HepG2 (cell line): ENCODE measurements at regions of chr2 and their contacts with region 1.

Region 1: GRCh38 chr2:231900486-231900942 is 25.7 kb downstream of the NPPC start:
- DNase-seq: peak; percentile 80
- ATAC-seq: peak; percentile 97
- H3K4me3 ChIP-seq: peak overlapping the region; percentile 11 to 58 (median 15); a peak in 4 of 6 replicates
- H3K27ac ChIP-seq: no peak overlapping the region
- H3K4me1 ChIP-seq: peaks cover 17% of the 10 kb centered on the region
- H3K27me3 ChIP-seq: peaks cover 0 to 25% of the 10 kb centered on the region in 2 experiments; a peak in 4 of 5 replicates
- CTCF ChIP-seq: peak; percentile 99
- EP300 ChIP-seq: no peak
- POLR2A ChIP-seq: no peak
- RAD21 ChIP-seq: peak; percentile 89

Region 2: GRCh38 chr2:231854671-231855070 is 45.8 kb before region 1 on chr2:
- CTCF ChIA-PET with region 1: no interaction called
- POLR2A ChIA-PET with region 1: no interaction called
- in situ Hi-C with region 1: no loop called
- intact Hi-C with region 1: loop called (anchors 2 kb)
- DNase-seq: no peak
- ATAC-seq: no peak; the same call in 2 of the 3 replicates
- H3K4me3 ChIP-seq: no peak overlapping the region
- H3K27ac ChIP-seq: no peak overlapping the region
- H3K4me1 ChIP-seq: no peaks in the 10 kb centered on the region
- H3K27me3 ChIP-seq: peaks cover 3 to 50% of the 10 kb centered on the region in 2 experiments
- CTCF ChIP-seq: no peak
- EP300 ChIP-seq: no peak
- POLR2A ChIP-seq: no peak
- RAD21 ChIP-seq: no peak

Region 3: GRCh38 chr2:232142049-232142448 is 241.5 kb after region 1 on chr2:
- CTCF ChIA-PET with region 1: interaction called, 26 read pairs
- POLR2A ChIA-PET with region 1: no interaction called
- in situ Hi-C with region 1: no loop called
- intact Hi-C with region 1: no loop called
- DNase-seq: peak; percentile 28
- ATAC-seq: peak; percentile 86
- H3K4me3 ChIP-seq: no peak overlapping the region
- H3K27ac ChIP-seq: no peak overlapping the region
- H3K4me1 ChIP-seq: peaks cover 14% of the 10 kb centered on the region
- H3K27me3 ChIP-seq: no peaks in the 10 kb centered on the region
- CTCF ChIP-seq: peak; percentile 73
- EP300 ChIP-seq: no peak
- POLR2A ChIP-seq: no peak
- RAD21 ChIP-seq: peak; percentile 79; the same call in 1 of the 2 replicates

Region 4: DNA sequence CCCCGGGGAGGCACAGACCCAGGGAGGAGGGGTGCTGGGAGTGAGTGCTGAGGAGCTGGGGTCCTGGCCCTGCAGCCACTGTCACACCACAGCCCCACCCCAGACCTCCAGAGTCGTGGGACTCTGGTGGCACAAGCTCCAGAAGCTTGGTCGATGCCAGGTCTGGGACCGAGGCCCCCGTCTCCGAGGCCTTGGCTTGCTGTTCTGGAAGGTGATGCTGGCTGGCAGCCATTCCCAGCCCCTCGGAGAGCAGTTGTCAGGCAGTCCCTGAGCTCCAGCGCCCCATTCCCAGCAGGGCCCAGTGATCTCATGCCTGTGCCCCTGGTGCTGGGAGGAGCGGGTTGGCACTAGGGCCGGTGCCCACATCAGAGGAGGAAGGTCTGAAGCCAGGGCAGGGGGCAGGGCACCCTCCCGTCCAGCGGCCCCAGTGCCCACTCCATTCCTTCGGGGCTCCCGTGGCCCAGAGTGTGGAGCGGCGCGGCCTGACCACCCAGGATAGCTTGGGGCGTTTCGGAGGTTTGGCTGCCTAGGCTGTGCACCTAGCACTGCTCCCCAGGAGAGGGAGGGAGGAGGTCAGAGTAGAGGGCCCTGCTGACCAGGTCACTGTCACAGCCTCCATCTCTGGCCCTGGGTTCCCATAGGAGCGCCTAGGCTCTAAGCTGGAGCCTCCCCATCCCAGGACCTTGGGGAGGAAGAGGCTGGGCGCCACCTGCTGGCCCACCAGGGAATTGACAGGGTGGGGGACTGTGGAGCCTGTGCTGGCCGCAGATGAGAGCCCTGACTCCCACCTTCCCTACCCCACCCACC is 538.6 kb after region 1 on chr2:
- CTCF ChIA-PET with region 1: interaction called, 11 read pairs
- POLR2A ChIA-PET with region 1: no interaction called
- in situ Hi-C with region 1: loop called (anchors 5 kb)
- intact Hi-C with region 1: no loop called
- DNase-seq: no peak
- ATAC-seq: peak; percentile 51
- H3K4me3 ChIP-seq: no peak overlapping the region
- H3K27ac ChIP-seq: no peak overlapping the region
- H3K4me1 ChIP-seq: peaks cover 12% of the 10 kb centered on the region
- H3K27me3 ChIP-seq: peaks cover 23 to 44% of the 10 kb centered on the region in 2 experiments
- CTCF ChIP-seq: peak; percentile 45
- EP300 ChIP-seq: no peak
- POLR2A ChIP-seq: no peak
- RAD21 ChIP-seq: no peak

Region 5: GRCh38 chr2:232444409-232445148 is 544.1 kb after region 1 on chr2:
- CTCF ChIA-PET with region 1: interaction called, 11 read pairs
- POLR2A ChIA-PET with region 1: no interaction called
- in situ Hi-C with region 1: loop called (anchors 5 kb)
- intact Hi-C with region 1: no loop called
- DNase-seq: peak; percentile 56
- ATAC-seq: peak; percentile 32
- H3K4me3 ChIP-seq: peak overlapping the region; percentile 8 to 73 (median 18)
- H3K27ac ChIP-seq: no peak overlapping the region
- H3K4me1 ChIP-seq: peaks cover 28% of the 10 kb centered on the region
- H3K27me3 ChIP-seq: peaks cover 3 to 22% of the 10 kb centered on the region in 2 experiments; a peak in 4 of 5 replicates
- CTCF ChIP-seq: peak; percentile 63
- EP300 ChIP-seq: no peak
- POLR2A ChIP-seq: no peak
- RAD21 ChIP-seq: 0 out of 2 replicates have a peak, but pooled peaks have one; percentile 28

Region 6: GRCh38 chr2:232521959-232522622 is 621.6 kb after region 1 on chr2:
- CTCF ChIA-PET with region 1: no interaction called
- POLR2A ChIA-PET with region 1: no interaction called
- in situ Hi-C with region 1: no loop called
- intact Hi-C with region 1: loop called (anchors 10 kb)
- DNase-seq: no peak
- ATAC-seq: peak; percentile 39
- H3K4me3 ChIP-seq: peak overlapping the region in 1 of 3 experiments; percentile 33; a peak in 1 of 6 replicates
- H3K27ac ChIP-seq: no peak overlapping the region
- H3K4me1 ChIP-seq: peaks cover 32% of the 10 kb centered on the region
- H3K27me3 ChIP-seq: peaks cover 31 to 86% of the 10 kb centered on the region in 2 experiments
- CTCF ChIP-seq: peak; percentile 79
- EP300 ChIP-seq: no peak
- POLR2A ChIP-seq: no peak
- RAD21 ChIP-seq: peak; percentile 96